ENCODE measurements at regions of chr3 and their contacts with region 1.

Region 1: GRCh38 chr3:63818281-63819150 is 583 bp upstream of the C3orf49 start:
- DNase-seq: no peak
- H3K4me3 ChIP-seq: no peak overlapping the region
- H3K27ac ChIP-seq: no peak overlapping the region
- H3K4me1 ChIP-seq: peaks cover 0 to 6% (median 5%) of the 10 kb centered on the region in 4 donors
- H3K27me3 ChIP-seq: no peaks in the 10 kb centered on the region
- CTCF ChIP-seq: peak; percentile 82 to 86 (median 84)
- EP300 ChIP-seq: no peak
- POLR2A ChIP-seq: no peak

Region 2: GRCh38 chr3:62622553-62623193 is 1195.8 kb before region 1 on chr3:
- intact Hi-C with region 1: loop called (anchors 10 kb)
- DNase-seq: no peak
- H3K4me3 ChIP-seq: no peak overlapping the region
- H3K27ac ChIP-seq: no peak overlapping the region
- H3K4me1 ChIP-seq: no peaks in the 10 kb centered on the region
- H3K27me3 ChIP-seq: peaks cover 0 to 3% (median 0%) of the 10 kb centered on the region in 4 donors
- CTCF ChIP-seq: peak; percentile 48 to 63 (median 61)
- EP300 ChIP-seq: no peak
- POLR2A ChIP-seq: no peak

Region 3: DNA sequence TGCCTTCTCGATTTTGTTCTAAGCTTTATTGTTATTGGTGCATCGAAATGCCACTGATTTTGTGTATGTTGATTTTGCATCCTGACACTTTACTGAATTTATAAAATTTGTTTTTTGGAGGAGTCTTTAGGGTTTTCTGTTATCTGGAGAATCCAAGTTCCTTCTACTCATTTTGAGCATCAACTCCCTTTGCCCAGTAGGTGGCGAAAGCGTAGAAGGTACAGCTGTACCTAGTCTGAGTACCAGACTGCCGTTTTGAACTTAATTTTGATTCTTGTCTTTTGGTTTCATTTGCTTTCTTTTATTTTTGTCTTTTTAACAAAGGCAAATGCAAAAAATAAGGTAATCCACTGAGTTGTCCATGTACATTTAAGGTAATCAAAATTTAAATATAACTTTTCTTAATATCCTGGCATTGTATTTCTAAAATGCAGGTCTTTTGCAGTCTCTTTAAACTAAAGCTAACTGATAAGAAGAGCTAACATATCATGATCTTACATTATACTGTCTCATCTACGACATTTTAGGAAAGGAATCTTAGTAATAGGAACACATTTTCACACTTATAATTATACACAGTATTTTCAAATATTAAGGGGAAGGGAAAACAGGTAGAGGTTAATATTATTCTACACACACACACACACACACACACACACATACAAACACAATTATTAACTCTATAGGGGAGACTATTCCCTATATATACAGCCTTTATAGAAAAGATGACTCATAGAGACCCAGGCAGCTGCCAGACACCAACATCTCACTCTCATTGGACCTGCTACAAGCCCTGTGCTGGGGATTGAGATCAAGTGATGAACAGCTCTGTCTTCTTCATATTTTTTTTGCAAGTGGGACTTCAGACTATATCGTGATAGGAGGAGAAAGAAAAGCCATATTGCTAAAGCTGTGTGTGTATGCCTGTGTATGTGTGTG is 468.7 kb before region 1 on chr3:
- intact Hi-C with region 1: loop called (anchors 2 kb)
- DNase-seq: no peak
- H3K4me3 ChIP-seq: no peak overlapping the region
- H3K27ac ChIP-seq: no peak overlapping the region
- H3K4me1 ChIP-seq: no peaks in the 10 kb centered on the region
- H3K27me3 ChIP-seq: peaks cover 0 to 24% (median 3%) of the 10 kb centered on the region in 4 donors
- CTCF ChIP-seq: peak; percentile 58 to 68 (median 59)
- EP300 ChIP-seq: no peak
- POLR2A ChIP-seq: no peak

Region 4: DNA sequence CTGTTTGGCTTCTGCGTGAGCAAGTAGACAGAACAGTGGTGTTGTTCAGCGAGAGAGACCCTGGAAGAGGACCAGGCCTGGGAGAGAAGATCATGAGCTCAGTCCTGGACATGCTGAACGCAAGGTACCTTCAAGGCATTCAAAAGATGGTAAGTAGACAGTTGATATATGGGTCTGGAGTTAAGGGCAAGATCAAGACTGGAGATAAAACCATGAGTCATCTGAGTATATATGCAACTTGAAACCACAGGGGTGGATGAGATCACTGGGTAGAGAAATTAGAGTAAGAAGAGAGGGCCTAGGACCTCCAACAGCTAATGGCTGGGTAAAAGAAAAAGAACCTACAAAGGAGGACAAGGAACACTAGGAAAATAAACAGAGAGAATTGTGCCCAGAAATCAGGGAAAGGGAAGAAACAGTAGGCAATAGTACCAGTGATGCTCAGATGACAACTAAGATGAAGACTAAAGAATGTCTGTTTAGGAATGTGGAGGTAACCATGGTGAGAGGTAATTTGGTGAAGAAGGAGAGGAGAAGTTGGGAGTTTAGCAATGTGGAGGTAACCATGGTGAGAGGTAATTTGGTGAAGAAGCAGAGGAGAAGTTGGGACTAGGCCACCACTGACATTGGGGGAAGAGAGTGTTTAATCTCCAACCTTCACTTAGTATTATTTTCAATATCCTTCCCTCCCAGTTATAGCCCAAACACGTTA is 1212.5 kb after region 1 on chr3:
- intact Hi-C with region 1: no loop called
- DNase-seq: no peak
- H3K4me3 ChIP-seq: no peak overlapping the region
- H3K27ac ChIP-seq: no peak overlapping the region
- H3K4me1 ChIP-seq: no peaks in the 10 kb centered on the region
- H3K27me3 ChIP-seq: no peaks in the 10 kb centered on the region
- CTCF ChIP-seq: no peak
- EP300 ChIP-seq: no peak
- POLR2A ChIP-seq: no peak